ENCODE measurements at regions of chr6 and their contacts with region 1.

Region 1: GRCh38 chr6:111997078-111997852 is 56.6 kb upstream of the CCN6 start:
- DNase-seq: peak; percentile 84
- ATAC-seq: peak; percentile 96

Region 2: GRCh38 chr6:111873178-111874024 is 123.9 kb before region 1 on chr6 and contains the start of gene FYN:
- intact Hi-C with region 1: loop called (anchors 10 kb)
- DNase-seq: peak; percentile 99
- ATAC-seq: peak; percentile 99
- total RNA-seq, gene FYN: 40.6 TPM

Region 3: DNA sequence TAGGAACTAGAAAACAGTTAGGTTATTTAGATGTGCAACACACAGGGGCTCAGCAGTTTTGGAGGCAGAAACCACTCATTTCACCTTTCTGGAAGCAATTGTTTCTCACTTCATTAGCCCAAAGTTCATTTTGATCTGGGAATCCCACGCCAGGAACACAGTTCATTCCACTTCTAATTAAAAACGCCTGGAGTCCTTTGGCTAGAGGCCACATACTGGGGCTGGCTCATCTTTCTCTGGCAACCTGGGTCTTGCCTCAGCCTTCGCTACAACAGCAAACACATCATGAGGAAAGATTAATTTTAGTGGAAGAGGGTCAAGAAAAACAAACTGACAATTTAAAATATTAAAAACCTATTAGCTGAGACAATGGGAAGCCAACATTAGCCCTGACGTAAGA is 419.6 kb after region 1 on chr6:
- intact Hi-C with region 1: no loop called
- DNase-seq: no peak
- ATAC-seq: peak; percentile 64

Measured in Right ventricle myocardium superior (tissue), 1 donor.